ENCODE measurements at regions of chr20 and their contacts with region 1.

Region 1: DNA sequence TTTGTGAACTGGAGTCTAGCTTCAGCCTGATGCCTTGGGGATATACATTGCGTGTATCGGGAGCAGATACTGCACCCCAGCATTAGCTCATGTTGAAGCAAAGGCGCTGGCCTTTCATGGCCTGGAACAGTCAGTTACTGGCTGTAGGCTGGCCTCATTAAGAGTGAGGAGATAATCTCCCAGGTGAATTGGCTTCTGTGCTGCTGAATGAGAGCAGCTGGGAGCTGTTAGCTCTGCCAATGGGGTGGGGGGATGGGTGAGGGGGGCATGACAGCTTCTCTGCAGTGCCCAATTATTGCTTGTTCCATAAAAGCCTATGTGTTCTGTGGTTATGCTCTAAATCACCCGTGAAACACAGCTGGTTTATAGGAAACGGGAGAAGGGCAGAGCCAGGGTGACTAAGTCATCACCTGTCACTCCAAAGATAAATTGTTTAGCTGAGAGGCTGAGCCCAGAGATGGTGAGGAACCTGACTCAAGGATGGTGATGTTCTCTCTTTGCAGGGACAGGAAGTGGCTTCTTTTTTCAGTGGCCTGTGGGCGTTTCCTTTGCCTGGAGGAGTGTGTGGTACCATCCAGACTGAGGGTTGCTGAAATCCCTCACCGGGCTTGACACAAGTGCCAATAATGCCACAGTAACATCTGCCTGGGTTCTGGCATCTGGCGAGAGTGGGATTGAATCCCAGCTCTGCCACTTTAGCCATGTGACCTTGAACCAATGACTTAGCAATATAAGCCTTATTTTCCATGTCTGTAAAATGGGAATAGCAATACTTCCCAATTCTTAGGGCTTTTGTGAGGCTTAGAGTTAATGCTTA is 170.8 kb downstream of the BCAS1 start:
- DNase-seq: peak; percentile 96
- H3K4me3 ChIP-seq: no peak overlapping the region
- H3K27ac ChIP-seq: peak overlapping the region; percentile 87
- H3K4me1 ChIP-seq: peaks cover 64% of the 10 kb centered on the region
- H3K27me3 ChIP-seq: no peaks in the 10 kb centered on the region
- CTCF ChIP-seq: no peak

Region 2: GRCh38 chr20:53884859-53885541 is 14.6 kb before region 1 on chr20:
- CTCF ChIA-PET with region 1: interaction called, 25 read pairs
- dilution Hi-C with region 1: no loop called
- in situ Hi-C with region 1: no loop called
- intact Hi-C with region 1: no loop called
- DNase-seq: no peak
- H3K4me3 ChIP-seq: no peak overlapping the region
- H3K27ac ChIP-seq: no peak overlapping the region
- H3K4me1 ChIP-seq: no peaks in the 10 kb centered on the region
- H3K27me3 ChIP-seq: no peaks in the 10 kb centered on the region
- CTCF ChIP-seq: no peak

Measured in mammary epithelial cell (primary cell).